Posterior vena cava (tissue), 2 donors: ENCODE measurements at regions of chr1 and their contacts with region 1.

Region 1: GRCh38 chr1:94719926-94720793 is 100.0 kb upstream of the SLC44A3 start:
- DNase-seq: no peak

Region 2: GRCh38 chr1:94255476-94255875 is 464.7 kb before region 1 on chr1:
- intact Hi-C with region 1: no loop called
- DNase-seq: no peak

Region 3: GRCh38 chr1:94783342-94784264 is 63.4 kb after region 1 on chr1:
- intact Hi-C with region 1: loop called in 1 of 2 experiments (anchors 10 kb)
- DNase-seq: peak; percentile 95

Region 4: DNA sequence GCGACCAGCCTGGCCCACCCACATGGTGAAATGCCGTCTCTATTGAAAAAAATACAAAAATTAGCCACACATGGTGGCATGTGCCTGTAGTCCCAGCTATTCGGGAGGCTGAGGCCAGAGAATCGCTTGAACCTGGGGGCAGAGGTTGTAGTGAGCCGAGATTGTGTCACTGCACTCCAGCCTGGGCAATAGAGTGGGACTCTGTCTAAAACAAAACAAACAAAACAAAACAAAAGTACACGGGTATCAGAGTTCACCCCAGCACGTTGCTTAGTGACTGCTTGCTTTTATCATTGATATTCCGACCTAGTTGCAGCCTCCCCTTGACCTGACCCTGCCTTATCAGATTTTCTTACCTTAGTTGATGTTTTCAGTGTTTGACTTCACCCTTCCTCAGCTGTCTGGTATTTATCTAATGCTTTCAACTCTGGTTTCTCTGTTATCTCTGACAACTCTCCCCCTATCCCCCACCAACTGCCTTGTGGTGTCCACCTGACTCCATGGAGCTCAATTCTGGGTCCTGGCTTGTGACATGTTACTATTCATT is 402.1 kb after region 1 on chr1:
- intact Hi-C with region 1: no loop called
- DNase-seq: no peak